ENCODE measurements at regions of chr4 and their contacts with region 1.

Region 1: DNA sequence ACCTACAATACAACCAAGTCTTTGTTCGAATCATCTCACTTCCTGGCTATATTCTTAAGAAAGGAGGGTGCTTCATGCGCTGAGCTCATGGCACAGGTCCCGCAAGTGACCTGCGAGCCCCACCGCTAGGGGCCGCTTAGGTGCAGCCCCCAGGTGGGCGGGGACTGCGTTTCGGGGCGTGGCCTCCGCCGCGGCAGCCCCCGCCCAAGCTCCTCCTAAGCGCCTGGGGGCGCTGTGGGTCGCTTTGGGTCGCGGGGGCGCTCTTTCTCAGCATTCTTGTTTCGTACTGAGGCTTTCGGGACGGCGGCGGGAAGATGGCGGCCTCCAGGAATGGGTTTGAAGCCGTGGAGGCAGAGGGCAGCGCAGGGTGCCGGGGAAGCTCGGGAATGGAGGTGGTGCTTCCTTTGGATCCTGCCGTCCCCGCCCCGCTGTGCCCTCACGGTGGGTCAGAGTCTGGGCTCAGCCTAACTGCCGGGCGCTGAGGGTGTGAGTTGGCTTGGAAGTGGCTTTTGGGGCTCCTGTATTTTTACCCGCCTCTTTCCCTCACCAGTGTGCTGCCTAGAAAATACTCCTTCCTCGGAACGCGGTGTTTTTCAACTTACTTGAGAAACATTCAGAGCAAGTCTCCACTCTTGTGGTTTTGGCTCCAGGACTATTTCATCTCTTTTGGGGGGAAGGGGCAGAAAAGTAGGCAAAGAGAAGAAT is at the start of gene ZCCHC4:
- DNase-seq: peak; percentile 90
- ATAC-seq: peak; percentile 100
- H3K4me3 ChIP-seq: peak within 1 kb of the TSS; percentile 79
- H3K27ac ChIP-seq: peak within 1 kb of the TSS; percentile 76
- H3K4me1 ChIP-seq: peaks cover 9% of the 10 kb centered on the region
- H3K27me3 ChIP-seq: no peaks in the 10 kb centered on the region
- CTCF ChIP-seq: peak; percentile 100; the same call in 1 of the 2 replicates
- POLR2A ChIP-seq: peak; percentile 63; the same call in 1 of the 2 replicates
- RAD21 ChIP-seq: peak; percentile 46
- total RNA-seq, gene ZCCHC4: 8.1 and 11.7 TPM in 2 replicates

Region 2: DNA sequence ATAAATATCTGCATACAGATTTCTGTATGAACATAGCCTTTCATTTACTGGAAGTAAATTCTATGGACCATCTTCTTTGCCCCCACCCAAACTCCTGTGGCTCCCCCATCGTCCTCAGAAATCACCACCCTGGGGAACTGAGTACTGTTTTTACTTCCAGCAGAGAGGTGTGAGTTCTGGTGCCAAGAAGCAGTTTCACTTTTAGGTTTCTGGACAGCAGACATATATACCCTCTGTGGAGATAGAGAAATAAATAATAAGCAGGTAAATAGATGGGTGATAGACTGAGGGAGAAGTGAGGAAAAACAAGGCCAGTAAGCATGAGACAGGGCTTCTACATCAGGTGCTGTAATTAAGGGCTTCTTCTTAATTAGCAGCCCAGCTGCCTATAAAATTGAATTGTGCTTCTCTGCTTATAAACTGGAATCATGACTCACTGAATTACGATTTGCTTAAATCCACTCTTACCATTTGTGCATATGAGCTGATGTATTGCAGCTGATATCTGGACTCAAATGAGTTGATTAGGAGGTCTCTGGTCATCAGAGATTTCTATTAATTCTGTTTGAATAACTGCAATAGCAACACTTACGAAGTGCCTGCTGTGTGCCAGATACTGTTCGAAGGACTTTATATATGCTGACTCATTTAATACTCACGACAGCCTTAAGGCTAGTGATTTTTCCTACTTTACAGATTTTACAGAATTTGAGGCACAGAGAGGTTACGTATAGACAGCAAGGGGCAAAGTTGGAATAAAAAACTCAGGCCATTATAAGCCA is 667.5 kb before region 1 on chr4:
- CTCF ChIA-PET with region 1: no interaction called
- POLR2A ChIA-PET with region 1: no interaction called
- dilution Hi-C with region 1: no loop called
- in situ Hi-C with region 1: no loop called
- intact Hi-C with region 1: no loop called
- DNase-seq: peak; percentile 45
- ATAC-seq: peak; percentile 16
- H3K4me3 ChIP-seq: no peak overlapping the region
- H3K27ac ChIP-seq: peak overlapping the region; percentile 34; the same call in 1 of the 2 replicates
- H3K4me1 ChIP-seq: peaks cover 26% of the 10 kb centered on the region
- H3K27me3 ChIP-seq: no peaks in the 10 kb centered on the region
- CTCF ChIP-seq: no peak
- POLR2A ChIP-seq: no peak
- RAD21 ChIP-seq: no peak

Region 3: DNA sequence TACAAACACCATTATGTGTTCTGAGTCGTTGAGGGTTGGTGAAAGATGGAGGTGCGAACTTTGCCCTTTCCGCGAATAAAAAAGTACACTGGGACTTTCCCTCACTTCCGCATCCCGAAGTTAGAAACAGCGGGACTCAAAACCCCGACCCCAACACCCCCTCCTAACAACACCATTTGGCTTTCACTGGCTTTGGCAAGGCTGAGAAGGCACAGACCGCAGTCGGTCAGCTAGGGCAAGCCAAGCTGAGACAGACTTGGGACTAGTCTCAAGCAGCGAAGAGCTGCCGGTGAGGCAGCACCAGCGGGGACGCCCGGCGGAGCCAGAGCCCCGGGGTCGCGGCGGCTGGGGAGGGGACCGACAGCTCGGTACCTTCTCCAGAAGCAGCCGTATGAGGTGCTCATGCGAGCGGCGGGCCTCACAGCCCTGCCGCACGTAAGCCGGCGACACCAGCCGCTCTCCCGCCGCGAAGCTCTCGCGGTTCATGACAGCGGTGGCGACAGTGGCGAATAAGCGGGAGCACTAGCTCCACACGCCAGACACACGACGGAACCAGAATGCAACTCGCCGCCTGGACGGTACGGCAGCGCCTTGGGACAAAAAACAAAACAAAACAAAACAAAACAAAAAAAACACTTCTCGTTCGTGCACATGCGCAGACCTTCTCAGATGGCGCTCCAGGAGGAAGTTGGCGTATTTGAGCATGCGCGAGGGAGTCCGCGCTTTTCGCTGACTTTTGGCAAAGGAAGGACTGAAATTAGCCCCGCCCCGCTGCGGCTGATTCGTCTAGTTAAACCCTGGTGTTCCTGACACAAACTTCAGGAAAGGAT is 152.5 kb before region 1 on chr4 and contains the start of gene SEPSECS:
- CTCF ChIA-PET with region 1: interaction called, 5 read pairs
- POLR2A ChIA-PET with region 1: no interaction called
- dilution Hi-C with region 1: no loop called
- in situ Hi-C with region 1: no loop called
- intact Hi-C with region 1: loop called (anchors 1 kb)
- DNase-seq: peak; percentile 95
- ATAC-seq: peak; percentile 87
- H3K4me3 ChIP-seq: peak within 1 kb of the TSS; percentile 66
- H3K27ac ChIP-seq: peak within 1 kb of the TSS; percentile 81
- H3K4me1 ChIP-seq: peaks cover 2% of the 10 kb centered on the region; the same call in 1 of the 2 replicates
- H3K27me3 ChIP-seq: no peaks in the 10 kb centered on the region
- CTCF ChIP-seq: no peak
- POLR2A ChIP-seq: peak; percentile 63; the same call in 1 of the 2 replicates
- RAD21 ChIP-seq: 0 out of 2 replicates have a peak, but pooled peaks have one; percentile 1
- total RNA-seq, gene SEPSECS: 5.0 and 6.7 TPM in 2 replicates

Region 4: DNA sequence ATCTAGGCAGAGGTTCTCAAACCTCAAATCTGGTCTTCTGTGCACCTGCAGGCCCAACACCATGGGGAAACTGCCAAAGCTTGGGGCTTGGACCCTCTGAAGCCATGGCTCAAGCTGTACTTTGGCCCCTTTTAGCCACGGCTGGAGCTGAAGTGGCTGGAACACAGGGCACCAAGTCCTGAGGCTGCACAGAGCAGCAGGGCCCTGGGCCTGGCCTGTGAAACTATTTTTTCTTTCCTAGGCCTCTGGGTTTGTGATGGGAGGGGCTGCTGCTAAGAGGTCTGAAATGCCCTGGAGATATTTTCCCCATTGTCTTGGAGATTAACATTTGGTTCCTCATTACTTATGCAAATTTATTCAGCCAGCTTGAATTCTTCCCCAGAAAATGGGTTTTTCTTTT is 97.1 kb before region 1 on chr4:
- CTCF ChIA-PET with region 1: no interaction called
- POLR2A ChIA-PET with region 1: no interaction called
- dilution Hi-C with region 1: no loop called
- in situ Hi-C with region 1: no loop called
- intact Hi-C with region 1: no loop called
- DNase-seq: no peak
- ATAC-seq: no peak
- H3K4me3 ChIP-seq: no peak overlapping the region
- H3K27ac ChIP-seq: no peak overlapping the region
- H3K4me1 ChIP-seq: no peaks in the 10 kb centered on the region
- H3K27me3 ChIP-seq: no peaks in the 10 kb centered on the region
- CTCF ChIP-seq: no peak
- POLR2A ChIP-seq: no peak
- RAD21 ChIP-seq: no peak

Region 5: GRCh38 chr4:25234390-25235370 is 78.0 kb before region 1 on chr4:
- CTCF ChIA-PET with region 1: interaction called, 4 read pairs
- POLR2A ChIA-PET with region 1: no interaction called
- dilution Hi-C with region 1: no loop called
- in situ Hi-C with region 1: no loop called
- intact Hi-C with region 1: loop called (anchors 2 kb)
- DNase-seq: peak; percentile 81
- ATAC-seq: peak; percentile 79
- H3K4me3 ChIP-seq: peak overlapping the region; percentile 91
- H3K27ac ChIP-seq: peak overlapping the region; percentile 75
- H3K4me1 ChIP-seq: 0 out of 2 replicates have a peak, but pooled peaks cover 2% of the 10 kb centered on the region
- H3K27me3 ChIP-seq: no peaks in the 10 kb centered on the region; the same call in 1 of the 2 replicates
- CTCF ChIP-seq: peak; percentile 60
- POLR2A ChIP-seq: no peak
- RAD21 ChIP-seq: peak; percentile 47

Region 6: DNA sequence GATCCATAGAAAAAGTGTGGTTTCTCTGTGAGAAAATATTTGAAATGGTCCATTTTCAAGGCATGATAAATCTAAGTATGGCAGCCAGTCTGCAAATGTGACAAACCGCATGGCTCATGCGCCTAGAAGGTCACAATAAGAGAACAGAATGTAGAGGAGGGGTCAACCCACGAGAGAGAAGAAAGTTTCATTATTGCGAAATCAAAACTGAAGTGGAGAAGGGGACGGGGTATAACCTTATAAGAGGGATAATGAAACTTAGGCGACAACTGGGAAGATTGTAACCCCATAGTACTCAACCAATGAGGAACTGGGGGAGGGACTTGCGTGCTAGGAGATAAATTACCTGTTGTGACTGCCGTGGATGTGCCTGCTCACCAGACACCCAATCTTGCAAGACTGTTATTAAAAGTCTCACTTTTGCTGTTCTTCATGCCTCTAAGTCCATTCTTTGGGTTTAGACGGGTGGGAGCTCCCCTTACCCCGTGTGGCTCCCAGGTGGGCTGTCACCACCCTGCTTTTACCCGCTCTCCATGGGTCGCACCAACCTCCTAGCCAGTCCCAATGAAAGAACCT is 21.4 kb before region 1 on chr4:
- CTCF ChIA-PET with region 1: interaction called, 10 read pairs
- POLR2A ChIA-PET with region 1: no interaction called
- dilution Hi-C with region 1: no loop called
- in situ Hi-C with region 1: no loop called
- intact Hi-C with region 1: no loop called
- DNase-seq: no peak
- ATAC-seq: no peak
- H3K4me3 ChIP-seq: no peak overlapping the region
- H3K27ac ChIP-seq: no peak overlapping the region
- H3K4me1 ChIP-seq: no peaks in the 10 kb centered on the region
- H3K27me3 ChIP-seq: no peaks in the 10 kb centered on the region; the same call in 1 of the 2 replicates
- CTCF ChIP-seq: no peak
- POLR2A ChIP-seq: no peak
- RAD21 ChIP-seq: no peak

Region 7: GRCh38 chr4:25302626-25303025 is 10.0 kb before region 1 on chr4:
- CTCF ChIA-PET with region 1: interaction called, 10 read pairs
- POLR2A ChIA-PET with region 1: no interaction called
- dilution Hi-C with region 1: no loop called
- in situ Hi-C with region 1: no loop called
- intact Hi-C with region 1: no loop called
- DNase-seq: no peak
- ATAC-seq: no peak
- H3K4me3 ChIP-seq: no peak overlapping the region
- H3K27ac ChIP-seq: no peak overlapping the region
- H3K4me1 ChIP-seq: no peaks in the 10 kb centered on the region
- H3K27me3 ChIP-seq: peaks cover 12% of the 10 kb centered on the region
- CTCF ChIP-seq: no peak
- POLR2A ChIP-seq: no peak
- RAD21 ChIP-seq: no peak

Region 8: GRCh38 chr4:25367004-25367621 is 54.5 kb after region 1 on chr4:
- CTCF ChIA-PET with region 1: interaction called, 15 read pairs
- POLR2A ChIA-PET with region 1: no interaction called
- dilution Hi-C with region 1: no loop called
- in situ Hi-C with region 1: no loop called
- intact Hi-C with region 1: loop called (anchors 2 kb)
- DNase-seq: peak; percentile 59
- ATAC-seq: peak; percentile 49
- H3K4me3 ChIP-seq: no peak overlapping the region
- H3K27ac ChIP-seq: no peak overlapping the region
- H3K4me1 ChIP-seq: no peaks in the 10 kb centered on the region
- H3K27me3 ChIP-seq: no peaks in the 10 kb centered on the region
- CTCF ChIP-seq: peak; percentile 79
- POLR2A ChIP-seq: no peak
- RAD21 ChIP-seq: peak; percentile 81